ENCODE measurements at regions of chr3 and their contacts with region 1.

Region 1: GRCh38 chr3:149352556-149352955 is 19.1 kb upstream of the TM4SF18 start:
- DNase-seq: peak; percentile 62
- H3K4me3 ChIP-seq: no peak overlapping the region
- H3K27ac ChIP-seq: no peak overlapping the region
- H3K4me1 ChIP-seq: peaks cover 4% of the 10 kb centered on the region
- H3K27me3 ChIP-seq: no peaks in the 10 kb centered on the region
- CTCF ChIP-seq: peak; percentile 76

Region 2: GRCh38 chr3:149393345-149394160 is 41.0 kb after region 1 on chr3:
- intact Hi-C with region 1: loop called (anchors 5 kb)
- DNase-seq: peak; percentile 75
- H3K4me3 ChIP-seq: no peak overlapping the region
- H3K27ac ChIP-seq: no peak overlapping the region
- H3K4me1 ChIP-seq: no peaks in the 10 kb centered on the region
- H3K27me3 ChIP-seq: no peaks in the 10 kb centered on the region
- CTCF ChIP-seq: peak; percentile 75

Region 3: DNA sequence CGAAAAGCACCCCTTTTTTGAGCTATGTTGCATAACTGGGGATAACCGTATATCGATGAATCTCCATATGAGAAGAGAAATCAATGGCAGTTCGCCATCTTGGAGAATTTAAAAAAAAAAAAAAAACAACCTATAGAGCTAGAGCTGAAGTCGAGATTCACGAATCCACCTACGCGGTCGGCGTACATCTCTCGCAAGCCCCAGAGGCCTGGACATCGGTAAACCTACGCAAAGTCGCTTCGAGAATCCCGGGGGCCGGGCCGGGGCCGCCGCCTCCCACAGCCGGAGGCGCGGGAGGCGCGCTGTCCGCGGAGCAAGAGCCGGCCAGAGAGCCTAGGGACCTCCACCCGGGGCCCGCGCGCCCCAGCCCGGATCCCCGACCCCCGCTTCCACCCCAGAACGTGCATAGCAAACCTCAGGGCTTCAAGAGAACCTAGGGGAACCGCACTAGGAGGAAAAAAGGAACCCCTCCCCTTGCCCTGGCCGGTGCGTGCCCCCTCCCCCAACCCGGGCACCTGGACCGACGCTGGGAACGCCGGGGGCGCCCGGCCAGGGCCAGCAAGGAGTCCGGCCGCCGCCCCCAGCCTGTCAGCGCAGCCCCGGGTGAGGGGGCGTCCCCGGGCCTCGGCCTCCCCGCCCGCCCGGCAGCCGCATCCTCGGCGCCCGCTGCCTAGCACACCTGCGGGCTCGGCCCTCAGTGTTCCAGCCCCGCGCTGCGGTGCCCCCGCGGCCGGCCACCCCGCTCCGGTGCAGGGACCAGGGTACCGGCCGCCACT is 617.6 kb after region 1 on chr3:
- intact Hi-C with region 1: no loop called
- DNase-seq: peak; percentile 88
- H3K4me3 ChIP-seq: peak overlapping the region; percentile 82
- H3K27ac ChIP-seq: peak overlapping the region; percentile 81
- H3K4me1 ChIP-seq: no peaks in the 10 kb centered on the region
- H3K27me3 ChIP-seq: no peaks in the 10 kb centered on the region
- CTCF ChIP-seq: no peak

Measured in colonic mucosa (tissue), 4 donors.